ENCODE measurements at regions of chr17 and their contacts with region 1.

Region 1: DNA sequence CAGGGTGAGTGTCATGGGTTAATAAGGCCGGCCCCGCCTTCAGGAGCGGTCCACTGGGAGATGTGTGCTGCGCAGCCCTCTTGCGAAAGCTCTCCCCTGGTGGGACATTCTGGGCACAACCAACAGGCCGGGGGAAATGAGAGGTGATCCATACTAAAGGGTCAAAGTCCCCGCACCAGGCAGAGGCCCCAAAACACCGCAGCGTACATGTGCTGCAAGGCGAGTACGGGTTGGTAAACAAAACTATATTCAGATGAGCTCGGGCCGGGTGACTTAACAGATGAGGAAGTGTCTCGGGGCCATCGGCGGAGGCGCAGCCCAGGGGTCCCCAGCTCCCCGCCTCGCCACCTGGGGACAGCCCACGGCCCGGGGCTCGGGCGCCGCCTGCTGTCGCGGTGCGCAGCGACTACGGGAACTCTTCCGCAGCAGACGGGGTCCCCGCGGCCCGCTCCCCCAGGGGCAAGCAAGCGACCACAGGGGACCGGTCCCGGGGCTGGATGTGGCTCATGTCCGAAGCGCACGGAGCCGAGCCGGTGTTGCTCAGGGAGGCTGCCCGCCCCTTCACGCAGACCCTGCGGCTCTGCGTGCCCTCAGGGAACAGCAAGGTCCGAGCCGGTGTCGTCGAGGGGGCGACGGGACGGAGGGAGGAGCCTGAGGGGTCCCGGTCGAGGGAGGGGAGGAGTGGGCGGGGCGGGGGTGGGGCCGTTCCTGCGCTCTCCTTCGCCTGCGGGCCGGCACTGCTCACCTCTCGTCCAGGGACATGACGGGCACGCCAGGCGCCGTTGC is at the start of gene RAB37:
- DNase-seq: peak; percentile 63
- ATAC-seq: peak; percentile 45 to 53
- total RNA-seq, gene RAB37: 0.58 to 3.2 TPM

Region 2: DNA sequence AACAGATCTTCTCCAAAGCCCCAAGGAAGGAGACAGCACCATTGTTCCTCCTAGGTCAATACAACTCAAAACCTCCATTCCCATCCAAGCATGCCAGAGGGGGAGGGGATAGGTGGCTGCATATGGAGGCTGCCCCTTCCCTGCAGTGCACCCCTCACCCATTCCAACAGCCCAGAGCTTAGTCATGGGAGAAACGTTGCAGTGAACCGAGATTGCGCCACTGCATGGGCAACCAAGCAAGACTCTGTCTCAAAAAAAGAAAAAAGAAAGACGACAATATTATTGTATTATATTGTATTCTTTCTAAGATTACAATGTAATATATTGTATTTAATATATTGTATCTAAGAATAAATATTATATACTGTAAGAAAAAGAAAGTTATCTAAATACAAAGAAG is 76.8 kb before region 1 on chr17:
- intact Hi-C with region 1: loop called in 1 of 2 experiments (anchors 5 kb)
- DNase-seq: no peak
- ATAC-seq: no peak